Right ventricle myocardium inferior (tissue), 1 donor: ENCODE measurements at regions of chr11 and their contacts with region 1.

Region 1: GRCh38 chr11:44621140-44621681 is 55.7 kb downstream of the CD82 start:
- DNase-seq: peak; percentile 89
- ATAC-seq: peak; percentile 71

Region 2: DNA sequence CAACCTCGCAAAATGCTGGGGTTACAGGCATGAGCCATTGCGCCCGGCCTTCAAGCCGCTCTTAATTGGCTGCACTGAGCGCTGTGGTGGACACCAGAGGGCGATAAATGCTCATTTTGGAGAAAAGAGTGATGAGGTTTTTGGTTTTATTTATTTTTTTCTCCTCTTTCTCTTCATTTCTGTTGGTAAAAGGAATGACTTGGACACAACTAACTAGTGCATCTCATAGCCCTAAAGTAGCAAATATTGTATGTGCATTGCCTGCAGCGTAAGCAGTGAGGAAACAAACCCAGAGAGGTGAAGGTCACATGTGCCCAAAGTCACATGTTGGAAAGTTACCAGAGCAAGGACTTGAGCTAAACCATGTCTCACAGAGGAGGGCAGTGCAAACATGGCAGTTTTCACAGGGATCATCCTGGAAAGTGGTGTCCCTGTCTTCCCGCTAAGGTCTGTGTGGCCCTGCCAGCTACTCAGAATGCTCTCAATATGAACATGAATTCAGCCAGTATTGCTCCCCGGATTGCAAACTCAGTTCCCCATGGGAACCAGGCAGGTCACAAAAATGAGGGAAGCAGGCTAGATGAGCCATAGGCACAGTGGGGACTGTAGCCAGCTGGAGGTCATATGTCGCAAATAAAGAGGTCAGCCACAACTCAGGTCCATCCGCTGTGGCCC is 64.3 kb before region 1 on chr11:
- intact Hi-C with region 1: loop called (anchors 1 kb)
- DNase-seq: peak; percentile 88
- ATAC-seq: peak; percentile 70

Region 3: GRCh38 chr11:44893846-44894617 is 272.8 kb after region 1 on chr11:
- intact Hi-C with region 1: loop called (anchors 1 kb)
- DNase-seq: peak; percentile 75
- ATAC-seq: peak; percentile 89

Region 4: GRCh38 chr11:44911029-44911814 is 290.0 kb after region 1 on chr11:
- intact Hi-C with region 1: loop called (anchors 1 kb)
- DNase-seq: peak; percentile 75
- ATAC-seq: peak; percentile 74